Left cardiac atrium (tissue), 4 donors: ENCODE measurements at regions of chr22 and their contacts with region 1.

Region 1: DNA sequence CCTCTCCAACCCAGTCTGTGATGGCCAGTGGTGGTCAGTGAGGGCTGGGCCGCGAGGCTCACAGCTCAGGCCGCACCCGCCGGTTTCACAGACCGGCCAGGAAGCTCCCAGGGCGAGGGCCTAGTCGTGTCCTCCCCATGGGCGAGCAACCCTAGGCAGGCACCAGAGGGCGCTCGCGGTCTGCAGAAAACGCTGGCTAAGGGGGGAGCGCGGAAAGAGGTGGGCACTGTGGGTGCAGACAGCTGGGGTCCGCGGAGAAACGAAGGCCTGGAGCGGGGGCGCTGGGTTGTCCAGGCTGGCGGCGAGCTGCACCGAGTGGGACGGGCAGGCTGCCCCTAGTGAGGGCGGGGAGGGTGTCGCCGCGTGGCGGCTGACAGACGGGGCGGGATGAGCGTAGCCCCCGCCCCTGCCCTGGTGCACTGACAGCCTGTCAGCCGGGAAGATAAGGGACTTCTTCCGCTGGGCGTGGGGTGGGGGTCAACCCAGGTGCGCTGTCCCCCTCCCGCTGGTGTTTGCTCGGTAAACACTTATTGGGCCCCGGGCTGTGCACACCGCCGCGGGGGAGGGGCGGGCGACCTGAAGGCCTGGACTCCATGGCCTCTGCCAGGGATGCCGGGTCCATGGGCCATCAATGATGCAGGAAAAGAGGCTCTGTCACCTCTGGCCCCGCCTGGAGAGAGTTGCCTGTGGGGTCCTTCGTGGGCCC is 7.5 kb downstream of the GP1BB start:
- DNase-seq: peak; percentile 87
- ATAC-seq: peak; percentile 90 to 93

Region 2: GRCh38 chr22:19909350-19910179 is 178.8 kb after region 1 on chr22:
- intact Hi-C with region 1: loop called (anchors 1 to 2 kb)
- DNase-seq: peak; percentile 89
- ATAC-seq: peak; percentile 89 to 94